GM12878 (cell line): ENCODE measurements at regions of chr20 and their contacts with region 1.

Region 1: GRCh38 chr20:49384437-49385088 is 97.9 kb downstream of the KCNB1 start:
- DNase-seq: no peak
- ATAC-seq: peak; percentile 87
- H3K4me3 ChIP-seq: no peak overlapping the region
- H3K27ac ChIP-seq: no peak overlapping the region
- H3K4me1 ChIP-seq: no peaks in the 10 kb centered on the region
- H3K27me3 ChIP-seq: no peaks in the 10 kb centered on the region; a peak in 1 of 4 replicates
- CTCF ChIP-seq: peak; percentile 46 to 73 (median 72)
- EP300 ChIP-seq: no peak
- POLR2A ChIP-seq: no peak
- RAD21 ChIP-seq: peak; percentile 35; the same call in 1 of the 2 replicates

Region 2: GRCh38 chr20:49230561-49231193 is 153.9 kb before region 1 on chr20:
- CTCF ChIA-PET with region 1: no interaction called
- POLR2A ChIA-PET with region 1: no interaction called
- RAD21 ChIA-PET with region 1: no interaction called
- SMC1A ChIA-PET with region 1: no interaction called
- in situ Hi-C with region 1: no loop called
- intact Hi-C with region 1: no loop called
- DNase-seq: no peak
- ATAC-seq: peak; percentile 75
- H3K4me3 ChIP-seq: no peak overlapping the region
- H3K27ac ChIP-seq: peak overlapping the region; percentile 10
- H3K4me1 ChIP-seq: peaks cover 10% of the 10 kb centered on the region
- H3K27me3 ChIP-seq: no peaks in the 10 kb centered on the region
- CTCF ChIP-seq: no peak
- EP300 ChIP-seq: no peak
- POLR2A ChIP-seq: no peak
- RAD21 ChIP-seq: no peak

Region 3: DNA sequence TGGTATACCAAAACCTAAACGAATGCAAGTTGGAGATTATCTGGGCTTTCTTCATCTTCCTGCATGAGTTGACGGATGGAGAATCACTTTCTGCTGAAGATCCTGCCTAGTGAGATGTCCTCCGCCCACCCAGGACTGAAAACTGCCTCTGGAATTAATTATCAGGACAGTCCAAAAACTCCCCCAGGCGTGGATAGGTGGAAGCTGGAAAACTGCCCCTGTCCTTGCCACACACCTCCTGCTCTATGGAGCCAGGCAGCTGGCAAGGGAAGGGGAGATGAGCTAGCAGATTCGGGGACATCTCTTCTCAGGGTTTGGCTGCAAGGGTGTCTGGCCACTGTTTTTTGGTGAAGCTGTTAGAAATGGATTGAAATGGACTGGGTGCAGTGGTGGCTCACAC is 17.4 kb before region 1 on chr20:
- CTCF ChIA-PET with region 1: interaction called, 20 read pairs
- POLR2A ChIA-PET with region 1: no interaction called
- RAD21 ChIA-PET with region 1: no interaction called
- SMC1A ChIA-PET with region 1: no interaction called
- in situ Hi-C with region 1: no loop called
- intact Hi-C with region 1: no loop called
- DNase-seq: no peak
- ATAC-seq: no peak
- H3K4me3 ChIP-seq: no peak overlapping the region
- H3K27ac ChIP-seq: no peak overlapping the region
- H3K4me1 ChIP-seq: no peaks in the 10 kb centered on the region
- H3K27me3 ChIP-seq: peaks cover 2 to 4% of the 10 kb centered on the region in 2 experiments; a peak in 3 of 4 replicates
- CTCF ChIP-seq: no peak
- EP300 ChIP-seq: no peak
- POLR2A ChIP-seq: no peak
- RAD21 ChIP-seq: no peak

Region 4: GRCh38 chr20:49484180-49485140 is 99.9 kb after region 1 on chr20:
- CTCF ChIA-PET with region 1: interaction called, 13 read pairs
- POLR2A ChIA-PET with region 1: no interaction called
- RAD21 ChIA-PET with region 1: interaction called, 3 read pairs
- SMC1A ChIA-PET with region 1: no interaction called
- in situ Hi-C with region 1: no loop called
- intact Hi-C with region 1: no loop called
- DNase-seq: no peak
- ATAC-seq: peak; percentile 94
- H3K4me3 ChIP-seq: 0 out of 2 replicates have a peak overlapping the region, but pooled peaks have one; percentile 12
- H3K27ac ChIP-seq: no peak overlapping the region
- H3K4me1 ChIP-seq: no peaks in the 10 kb centered on the region
- H3K27me3 ChIP-seq: peaks cover 7 to 8% of the 10 kb centered on the region in 2 experiments; a peak in 3 of 4 replicates
- CTCF ChIP-seq: peak; percentile 41 to 63 (median 61)
- EP300 ChIP-seq: no peak
- POLR2A ChIP-seq: no peak
- RAD21 ChIP-seq: peak; percentile 39; the same call in 1 of the 2 replicates

Region 5: DNA sequence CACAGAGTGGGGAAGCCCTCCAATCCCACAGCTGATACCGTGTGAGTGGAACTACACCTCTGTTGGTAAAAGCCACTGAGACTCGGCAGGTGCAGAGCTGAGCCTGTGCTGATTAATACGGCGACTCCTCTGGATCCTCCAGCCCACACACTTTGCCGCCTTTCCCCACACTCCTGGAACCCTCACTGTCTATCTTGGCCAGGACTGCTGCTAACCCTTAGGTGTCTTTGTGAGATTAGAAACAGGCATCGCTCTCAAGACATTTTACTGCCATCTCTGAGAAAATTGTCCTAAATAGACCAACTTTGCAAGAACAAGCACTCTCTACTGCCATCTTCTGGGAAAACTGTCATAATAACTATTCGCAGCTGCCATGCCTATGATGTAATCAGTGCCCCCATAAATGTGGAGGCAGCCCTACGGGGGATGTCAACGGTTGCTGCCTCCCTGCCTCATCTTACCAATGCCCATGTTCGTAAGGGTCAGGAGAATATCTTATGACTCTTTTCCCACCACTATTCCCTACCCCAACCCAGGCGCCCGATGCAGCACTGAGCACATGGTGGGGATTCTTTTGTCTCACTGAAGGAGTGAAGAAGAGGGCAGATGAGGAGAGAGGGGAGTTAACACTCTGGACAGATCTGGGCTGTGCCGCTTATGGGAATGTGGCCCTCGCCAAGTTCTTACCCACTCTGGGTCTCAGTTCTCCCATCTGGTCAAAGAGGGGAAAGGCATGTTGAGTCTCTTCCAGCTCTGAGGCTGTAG is 124.1 kb after region 1 on chr20:
- CTCF ChIA-PET with region 1: interaction called, 10 read pairs
- POLR2A ChIA-PET with region 1: no interaction called
- RAD21 ChIA-PET with region 1: no interaction called
- SMC1A ChIA-PET with region 1: no interaction called
- in situ Hi-C with region 1: no loop called
- intact Hi-C with region 1: no loop called
- DNase-seq: peak; percentile 7
- ATAC-seq: peak; percentile 81
- H3K4me3 ChIP-seq: no peak overlapping the region
- H3K27ac ChIP-seq: no peak overlapping the region
- H3K4me1 ChIP-seq: no peaks in the 10 kb centered on the region
- H3K27me3 ChIP-seq: peaks cover 4% of the 10 kb centered on the region in 2 experiments; a peak in 2 of 4 replicates
- CTCF ChIP-seq: peak; percentile 45 to 55 (median 53); a peak in 5 of 6 replicates
- EP300 ChIP-seq: no peak
- POLR2A ChIP-seq: no peak
- RAD21 ChIP-seq: peak; percentile 44